ENCODE measurements at regions of chr1 and their contacts with region 1.

Region 1: GRCh38 chr1:9689011-9689706 is 37.6 kb downstream of the PIK3CD start:
- DNase-seq: peak; percentile 89
- H3K4me3 ChIP-seq: peak overlapping the region; percentile 58 to 94 (median 78)
- H3K27ac ChIP-seq: peak overlapping the region; percentile 60 to 79 (median 67)
- H3K4me1 ChIP-seq: peaks cover 0 to 38% (median 28%) of the 10 kb centered on the region in 4 donors
- H3K27me3 ChIP-seq: no peaks in the 10 kb centered on the region
- CTCF ChIP-seq: no peak
- EP300 ChIP-seq: no peak
- POLR2A ChIP-seq: no peak

Region 2: GRCh38 chr1:9466780-9467758 is 222.1 kb before region 1 on chr1:
- intact Hi-C with region 1: no loop called
- DNase-seq: peak; percentile 82
- H3K4me3 ChIP-seq: peak overlapping the region in 2 of 4 donors; percentile 22 to 31
- H3K27ac ChIP-seq: peak overlapping the region; percentile 41 to 92 (median 66)
- H3K4me1 ChIP-seq: peaks cover 0 to 16% (median 14%) of the 10 kb centered on the region in 4 donors
- H3K27me3 ChIP-seq: no peaks in the 10 kb centered on the region
- CTCF ChIP-seq: no peak
- EP300 ChIP-seq: no peak
- POLR2A ChIP-seq: no peak

Region 3: DNA sequence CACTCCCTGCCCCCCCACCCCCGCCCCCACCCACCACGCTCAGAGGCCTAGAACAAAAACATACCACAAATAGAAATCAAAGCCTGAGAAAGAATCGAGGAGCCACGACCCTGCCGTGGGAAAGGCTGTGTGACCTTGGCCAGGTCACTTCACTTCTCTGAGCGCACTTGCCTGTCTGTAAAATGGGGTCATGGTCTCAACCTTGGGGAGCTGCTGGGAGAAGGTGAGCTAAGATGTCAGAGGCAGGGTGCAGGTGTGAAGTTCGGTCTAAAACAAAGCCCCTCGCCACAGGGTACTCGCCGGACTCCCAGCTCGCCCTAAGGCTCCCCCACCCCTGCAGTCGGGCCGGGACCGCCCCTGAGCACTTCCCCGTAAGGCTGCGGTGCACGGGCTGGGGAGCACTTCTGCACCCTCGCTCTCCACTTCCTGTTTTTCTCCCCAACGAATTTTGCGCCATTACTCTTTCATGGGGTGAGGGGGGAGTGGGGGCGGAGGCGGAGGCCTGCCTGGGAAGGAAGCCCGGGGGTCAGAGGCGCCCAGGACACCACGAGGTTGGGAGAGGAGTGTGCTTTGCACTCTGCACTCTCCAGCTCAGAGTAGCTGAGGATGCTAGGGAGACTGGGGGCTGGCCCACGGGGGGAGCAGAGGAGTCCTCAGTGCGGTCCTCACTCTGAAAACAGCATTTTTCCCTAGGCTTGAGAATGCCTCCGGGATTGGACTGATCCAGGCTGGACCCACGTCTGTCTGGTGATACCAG is 59.5 kb before region 1 on chr1:
- intact Hi-C with region 1: loop called (anchors 1 kb)
- DNase-seq: no peak
- H3K4me3 ChIP-seq: no peak overlapping the region
- H3K27ac ChIP-seq: no peak overlapping the region
- H3K4me1 ChIP-seq: peaks cover 0 to 11% (median 6%) of the 10 kb centered on the region in 4 donors
- H3K27me3 ChIP-seq: peaks cover 0 to 11% (median 0%) of the 10 kb centered on the region in 3 donors
- CTCF ChIP-seq: no peak
- EP300 ChIP-seq: no peak
- POLR2A ChIP-seq: no peak

Region 4: GRCh38 chr1:9671377-9672140 is 17.6 kb before region 1 on chr1:
- intact Hi-C with region 1: no loop called
- DNase-seq: no peak
- H3K4me3 ChIP-seq: no peak overlapping the region
- H3K27ac ChIP-seq: no peak overlapping the region
- H3K4me1 ChIP-seq: no peaks in the 10 kb centered on the region
- H3K27me3 ChIP-seq: peaks cover 0 to 4% (median 0%) of the 10 kb centered on the region in 3 donors
- CTCF ChIP-seq: no peak
- EP300 ChIP-seq: no peak
- POLR2A ChIP-seq: no peak

Region 5: GRCh38 chr1:9823943-9824701 is 135.0 kb after region 1 on chr1 and contains the start of gene CLSTN1:
- intact Hi-C with region 1: loop called (anchors 5 kb)
- DNase-seq: peak; percentile 94
- H3K4me3 ChIP-seq: peak within 1 kb of the TSS; percentile 77 to 93 (median 84)
- H3K27ac ChIP-seq: peak within 1 kb of the TSS; percentile 87 to 97 (median 94)
- H3K4me1 ChIP-seq: peaks cover 0 to 42% (median 34%) of the 10 kb centered on the region in 4 donors
- H3K27me3 ChIP-seq: no peaks in the 10 kb centered on the region
- CTCF ChIP-seq: no peak
- EP300 ChIP-seq: no peak
- POLR2A ChIP-seq: peak; percentile 25 to 28
- total RNA-seq, gene CLSTN1: 33.9 to 71.2 (median 36.4) TPM

Measured in sigmoid colon (tissue), 7 donors.